Activated T-helper 1 cell treated with anti-CD3 and anti-CD28 coated beads, Interleukin-12 subunit alpha, Interleukin-12 subunit beta, Interleukin-2, Interleukin-4 antibody, amounts not matched to agents 30 ng/mL and 10 ng/mL and 1 ng/mL, durations not matched to agents 14 hours and 24 hours and 36 hours (primary cell): ENCODE measurements at regions of chr7 and their contacts with region 1.

Region 1: GRCh38 chr7:7968543-7969305 is at the start of gene GLCCI1:
- DNase-seq: peak; percentile 95
- H3K4me3 Mint-ChIP-seq: peak within 1 kb of the TSS; percentile 89
- H3K27ac Mint-ChIP-seq: peak within 1 kb of the TSS; percentile 91
- H3K4me1 Mint-ChIP-seq: peaks cover 20% of the 10 kb centered on the region
- H3K27me3 Mint-ChIP-seq: no peaks in the 10 kb centered on the region
- total RNA-seq, gene GLCCI1: 13.4 and 13.5 TPM in 2 replicates

Region 2: DNA sequence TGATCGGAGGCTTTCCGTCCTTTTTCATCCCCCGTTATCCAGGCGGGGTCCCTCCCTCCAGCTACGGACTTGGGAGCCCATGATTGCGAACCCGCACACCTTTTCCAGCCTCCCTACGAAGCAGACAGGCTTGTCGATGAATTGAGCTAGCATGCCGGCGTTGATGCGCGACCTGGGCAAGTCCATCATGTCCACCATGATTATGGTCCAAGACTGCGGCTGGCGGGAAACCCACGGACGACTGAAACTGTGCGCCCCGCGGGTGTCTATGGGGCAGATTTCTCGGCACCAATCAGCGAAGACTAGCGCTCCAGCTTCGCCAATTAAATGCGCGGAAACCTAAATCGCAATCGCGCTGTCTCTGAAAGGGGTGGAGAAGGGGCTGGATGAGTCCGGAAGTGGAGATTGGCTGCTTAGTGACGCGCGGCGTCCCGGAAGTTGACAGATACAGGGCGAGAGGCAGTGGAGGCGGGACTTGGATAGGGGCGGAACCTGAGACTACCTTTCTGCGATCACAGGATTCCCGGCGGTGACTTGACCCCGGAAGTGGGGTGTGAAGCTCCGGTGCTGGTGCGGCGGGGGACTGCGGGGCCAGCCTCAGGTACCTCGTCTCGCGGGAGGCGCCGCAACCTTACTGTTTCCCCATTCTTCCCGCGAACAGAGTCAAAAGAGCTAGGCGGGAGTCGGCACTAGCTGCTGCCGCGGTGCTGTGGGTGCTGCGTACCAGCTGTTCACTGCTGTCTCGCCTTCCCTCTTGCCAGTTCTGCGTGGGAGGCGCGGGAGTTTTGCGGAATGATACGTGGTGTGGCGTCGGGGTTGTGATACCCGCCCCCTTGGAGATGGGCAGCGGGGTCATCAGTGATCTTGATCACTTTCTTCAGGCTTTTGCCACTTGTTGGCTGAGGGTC is 328.2 kb before region 1 on chr7 and contains the start of gene UMAD1:
- intact Hi-C with region 1: loop called (anchors 1 kb)
- DNase-seq: peak; percentile 98
- H3K4me3 Mint-ChIP-seq: peak within 1 kb of the TSS; percentile 96
- H3K27ac Mint-ChIP-seq: peak within 1 kb of the TSS; percentile 97
- H3K4me1 Mint-ChIP-seq: peaks cover 40% of the 10 kb centered on the region
- H3K27me3 Mint-ChIP-seq: no peaks in the 10 kb centered on the region
- total RNA-seq, gene UMAD1: 13.6 and 14.2 TPM in 2 replicates

Region 3: GRCh38 chr7:7772397-7772821 is 196.3 kb before region 1 on chr7:
- intact Hi-C with region 1: loop called (anchors 1 kb)
- DNase-seq: no peak
- H3K4me3 Mint-ChIP-seq: peak overlapping the region; percentile 54
- H3K27ac Mint-ChIP-seq: peak overlapping the region; percentile 42
- H3K4me1 Mint-ChIP-seq: peaks cover 23% of the 10 kb centered on the region
- H3K27me3 Mint-ChIP-seq: peaks cover 3% of the 10 kb centered on the region

Region 4: GRCh38 chr7:7944619-7945282 is 24.0 kb before region 1 on chr7:
- intact Hi-C with region 1: loop called (anchors 1 kb)
- DNase-seq: peak; percentile 38
- H3K4me3 Mint-ChIP-seq: peak overlapping the region; percentile 68
- H3K27ac Mint-ChIP-seq: peak overlapping the region; percentile 74
- H3K4me1 Mint-ChIP-seq: peaks cover 15% of the 10 kb centered on the region
- H3K27me3 Mint-ChIP-seq: peaks cover 5% of the 10 kb centered on the region

Region 5: DNA sequence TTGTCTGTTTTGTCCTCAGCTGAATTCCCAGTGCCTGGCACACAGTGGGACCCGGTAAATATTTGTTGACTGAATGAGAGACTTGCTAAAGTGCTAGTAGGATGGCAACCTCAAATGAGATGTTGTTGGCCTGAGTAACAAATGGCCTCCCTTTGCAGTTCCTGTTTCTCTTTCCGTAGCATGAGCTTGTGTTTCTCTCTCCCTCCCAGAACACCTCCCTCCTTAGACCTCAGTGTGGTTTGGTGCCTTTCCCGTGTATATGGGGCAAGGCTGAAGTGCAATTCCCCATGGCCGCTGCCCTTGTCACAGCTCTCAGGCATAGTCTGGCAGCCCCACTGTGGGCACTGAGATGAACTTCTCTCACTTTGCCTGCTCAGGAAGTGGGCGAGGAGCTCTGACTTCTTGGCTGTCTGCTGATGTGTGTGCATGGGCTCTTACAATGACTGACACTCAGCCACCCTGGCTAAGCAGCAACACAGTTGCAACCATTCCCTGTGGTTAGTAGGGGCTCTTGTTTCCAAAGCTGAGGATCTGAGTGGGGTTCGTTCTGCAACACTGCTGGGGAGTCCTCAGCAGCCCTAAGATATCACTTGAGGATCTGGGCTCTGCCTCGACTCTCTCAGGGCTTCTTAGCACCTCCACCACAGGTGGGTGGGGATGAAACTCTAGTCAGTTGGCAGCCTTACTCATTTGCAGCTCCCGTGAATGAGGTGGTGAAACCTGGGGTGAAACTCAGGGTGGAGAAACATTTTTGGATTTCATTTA is 157.1 kb after region 1 on chr7:
- intact Hi-C with region 1: loop called (anchors 1 kb)
- DNase-seq: peak; percentile 69
- H3K4me3 Mint-ChIP-seq: peak overlapping the region; percentile 64
- H3K27ac Mint-ChIP-seq: peak overlapping the region; percentile 98
- H3K4me1 Mint-ChIP-seq: peaks cover 82% of the 10 kb centered on the region
- H3K27me3 Mint-ChIP-seq: peaks cover 5% of the 10 kb centered on the region

Region 6: GRCh38 chr7:8162181-8162580 is 193.5 kb after region 1 on chr7:
- intact Hi-C with region 1: no loop called
- DNase-seq: no peak
- H3K4me3 Mint-ChIP-seq: no peak overlapping the region
- H3K27ac Mint-ChIP-seq: no peak overlapping the region
- H3K4me1 Mint-ChIP-seq: no peaks in the 10 kb centered on the region
- H3K27me3 Mint-ChIP-seq: peaks cover 2% of the 10 kb centered on the region

Region 7: DNA sequence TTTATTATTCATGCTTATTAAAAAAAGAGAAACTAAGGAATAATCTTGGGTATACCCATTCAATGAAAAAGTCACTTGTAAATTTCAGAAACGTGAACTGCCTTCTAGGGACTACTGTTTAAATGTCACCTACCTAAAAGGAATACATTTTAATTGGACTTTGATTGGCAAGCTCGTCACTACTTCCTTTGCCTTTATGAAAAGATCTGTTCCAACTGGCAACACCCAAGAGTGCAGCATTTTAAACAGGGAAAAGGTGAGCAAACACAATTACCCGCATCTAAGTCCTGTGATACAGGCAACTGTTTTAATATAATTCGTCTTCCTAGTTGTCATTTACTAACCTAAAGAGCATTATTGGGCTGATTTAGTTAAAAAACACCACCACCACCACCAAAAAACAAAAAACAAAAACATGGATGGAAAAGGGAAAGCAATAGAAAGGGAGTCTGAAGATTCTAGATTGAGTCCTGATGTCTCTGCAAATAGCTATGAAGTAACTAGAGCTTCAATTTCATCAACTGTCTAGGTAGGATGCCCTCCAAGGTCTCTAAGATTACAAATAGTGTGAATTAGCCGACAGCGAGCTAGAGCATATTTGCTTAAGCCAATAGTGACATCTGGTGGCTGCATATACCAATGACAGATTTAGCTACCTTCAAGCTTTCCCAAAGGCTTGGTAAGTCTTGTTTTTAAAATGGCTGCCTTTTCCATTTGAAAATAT is 327.1 kb after region 1 on chr7:
- intact Hi-C with region 1: loop called (anchors 5 kb)
- DNase-seq: peak; percentile 8
- H3K4me3 Mint-ChIP-seq: no peak overlapping the region
- H3K27ac Mint-ChIP-seq: no peak overlapping the region
- H3K4me1 Mint-ChIP-seq: peaks cover 4% of the 10 kb centered on the region
- H3K27me3 Mint-ChIP-seq: peaks cover 13% of the 10 kb centered on the region